Activated naive CD4-positive, alpha-beta T cell treated with anti-CD3 and anti-CD28 coated beads, Interleukin-2, amount 10 ng/mL, durations not matched to agents 7 days and 5 days (primary cell): ENCODE measurements at regions of chr1 and their contacts with region 1.

Region 1: DNA sequence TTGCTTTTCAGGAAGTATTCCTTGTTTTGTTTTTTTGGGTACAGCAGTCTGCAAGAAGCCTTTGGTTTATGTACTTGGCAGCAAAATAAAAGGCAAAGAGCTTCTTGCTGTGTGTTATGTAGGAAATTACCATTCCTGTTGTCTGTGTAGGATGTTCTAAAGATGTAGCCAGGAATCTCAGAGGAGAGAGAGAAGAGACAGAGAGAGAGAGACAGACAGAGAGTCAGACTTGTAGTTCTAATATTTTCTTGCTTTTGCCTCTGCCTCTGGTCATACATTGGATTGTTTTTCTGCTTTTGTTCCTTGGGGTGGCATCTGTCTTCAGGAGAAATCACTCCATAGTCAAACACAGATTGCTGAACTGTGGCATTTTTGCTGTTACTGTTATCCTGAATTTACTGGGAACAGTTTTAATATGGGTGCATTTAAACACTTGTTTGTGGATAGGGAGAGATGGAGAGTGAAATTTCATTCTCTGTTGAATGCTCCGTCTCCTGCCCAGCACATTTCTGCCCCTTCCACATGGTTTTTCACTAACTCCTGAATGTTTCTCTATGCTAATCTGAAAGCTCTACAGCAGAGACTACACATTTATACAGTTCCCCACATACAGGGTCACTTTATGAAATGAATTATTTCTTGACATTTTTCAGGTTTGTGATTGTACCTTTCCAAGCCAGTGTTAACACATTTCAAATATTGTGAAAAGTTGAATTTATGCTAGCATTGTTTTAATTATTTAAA is 49.8 kb downstream of the POU2F1 start:
- DNase-seq: no peak
- H3K4me3 Mint-ChIP-seq: no peak overlapping the region
- H3K27ac Mint-ChIP-seq: no peak overlapping the region
- H3K4me1 Mint-ChIP-seq: peaks cover 14% of the 10 kb centered on the region
- H3K27me3 Mint-ChIP-seq: no peaks in the 10 kb centered on the region

Region 2: GRCh38 chr1:167442124-167442848 is 171.8 kb after region 1 on chr1:
- CTCF ChIA-PET with region 1: interaction called, 14 read pairs
- DNase-seq: peak; percentile 92
- H3K4me3 Mint-ChIP-seq: no peak overlapping the region
- H3K27ac Mint-ChIP-seq: peak overlapping the region; percentile 80
- H3K4me1 Mint-ChIP-seq: peaks cover 95% of the 10 kb centered on the region
- H3K27me3 Mint-ChIP-seq: no peaks in the 10 kb centered on the region

Region 3: DNA sequence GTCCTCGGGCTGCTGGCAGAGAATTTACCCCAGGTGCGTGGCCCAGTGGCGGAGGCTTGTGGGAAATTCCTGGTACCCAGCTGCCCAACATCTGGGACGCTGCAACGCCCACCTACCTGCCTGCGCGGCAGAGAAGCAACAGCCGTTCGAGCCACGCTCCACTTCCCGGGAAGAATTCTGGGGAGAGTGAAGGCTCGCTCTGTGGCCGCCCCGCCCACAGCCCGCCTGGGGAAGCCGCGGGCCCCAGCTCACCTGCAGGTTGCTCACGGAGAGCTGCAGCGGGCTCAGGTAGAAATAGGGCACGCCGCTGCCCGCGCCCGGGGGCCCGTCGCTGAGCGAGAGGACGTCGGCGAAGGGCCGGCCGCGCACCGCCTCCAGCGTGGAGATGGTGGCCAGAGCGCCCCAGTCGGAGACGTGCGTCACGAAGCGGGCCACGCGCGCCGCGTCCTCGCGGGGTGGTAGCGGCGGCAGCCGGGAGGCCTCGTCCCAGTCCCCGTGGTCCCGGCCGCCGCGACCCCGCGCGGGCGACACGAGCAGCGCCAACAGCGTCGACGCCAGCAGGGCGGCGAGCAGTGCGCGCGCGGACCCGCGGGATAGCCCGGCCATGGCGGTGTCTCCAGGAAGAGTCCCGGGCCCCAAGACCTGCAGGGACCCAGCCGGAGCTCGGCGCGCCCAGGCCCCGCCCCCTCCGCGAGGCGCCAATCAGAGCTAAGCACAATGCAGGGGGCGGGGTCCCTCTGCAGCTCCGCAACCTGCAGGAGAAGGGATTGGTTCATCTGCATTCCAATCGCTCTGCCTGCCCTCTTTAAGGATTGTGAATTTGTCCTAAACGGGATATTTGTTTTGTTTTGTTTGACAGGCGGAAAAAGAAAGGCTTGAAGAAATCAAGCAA is 282.9 kb after region 1 on chr1 and contains the start of gene CREG1:
- CTCF ChIA-PET with region 1: interaction called, 10 read pairs
- DNase-seq: peak; percentile 96
- H3K4me3 Mint-ChIP-seq: peak within 1 kb of the TSS; percentile 84
- H3K27ac Mint-ChIP-seq: peak within 1 kb of the TSS; percentile 83
- H3K4me1 Mint-ChIP-seq: peaks cover 26% of the 10 kb centered on the region
- H3K27me3 Mint-ChIP-seq: peaks cover 14% of the 10 kb centered on the region